ENCODE measurements at regions of chr9 and their contacts with region 1.

Region 1: GRCh38 chr9:37390759-37391158 is 31.7 kb upstream of the GRHPR start:
- DNase-seq: peak; percentile 75
- ATAC-seq: peak; percentile 85
- H3K4me3 Mint-ChIP-seq: no peak overlapping the region
- H3K27ac Mint-ChIP-seq: no peak overlapping the region
- H3K4me1 Mint-ChIP-seq: no peaks in the 10 kb centered on the region
- H3K27me3 Mint-ChIP-seq: no peaks in the 10 kb centered on the region
- CTCF ChIP-seq: peak; percentile 60; the same call in 1 of the 2 replicates

Region 2: DNA sequence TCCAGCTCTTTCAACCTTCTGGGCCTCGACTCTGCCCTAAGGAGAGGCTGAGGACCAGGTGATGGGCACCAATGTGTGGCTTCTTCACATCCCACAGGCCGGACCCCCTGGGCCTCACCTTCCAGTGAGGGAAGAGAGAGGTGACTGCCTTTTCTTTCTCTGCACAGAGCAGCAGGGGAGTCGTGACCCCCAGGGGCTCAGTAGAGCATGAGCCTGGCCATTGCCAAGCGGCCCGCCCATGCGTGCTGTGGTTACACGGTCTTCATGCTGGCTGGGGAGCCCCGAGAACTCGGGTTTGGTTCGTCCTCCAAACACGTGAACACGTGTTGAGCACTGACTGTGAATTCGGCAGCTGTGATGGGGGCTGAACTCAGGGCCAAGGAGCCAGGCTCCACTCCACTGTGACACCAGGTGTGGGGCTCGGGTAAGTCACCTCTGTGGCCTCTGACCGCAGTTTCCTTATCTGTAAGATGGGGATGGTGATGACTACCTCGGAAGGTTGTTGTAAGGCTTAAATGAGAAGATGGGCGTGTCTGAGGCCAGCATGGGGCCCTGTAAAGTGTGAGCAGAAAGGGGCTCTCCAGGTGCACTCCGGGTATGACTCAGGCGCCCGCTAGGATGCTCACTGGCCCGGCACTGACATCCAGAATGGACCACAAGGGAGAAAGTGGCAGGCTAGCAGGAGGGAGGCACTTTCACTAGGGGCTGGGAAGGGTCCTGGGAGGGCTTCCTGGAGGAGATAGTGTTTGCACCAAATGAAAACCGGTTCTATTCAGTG is 18.4 kb after region 1 on chr9:
- CTCF ChIA-PET with region 1: interaction called, 29 read pairs
- POLR2A ChIA-PET with region 1: no interaction called
- DNase-seq: no peak
- ATAC-seq: no peak
- H3K4me3 Mint-ChIP-seq: no peak overlapping the region
- H3K27ac Mint-ChIP-seq: no peak overlapping the region
- H3K4me1 Mint-ChIP-seq: peaks cover 23% of the 10 kb centered on the region
- H3K27me3 Mint-ChIP-seq: no peaks in the 10 kb centered on the region
- CTCF ChIP-seq: no peak

Measured in WTC11 (cell line).